Activated CD4-positive, alpha-beta memory T cell treated with anti-CD3 and anti-CD28 coated beads for 36 hours (primary cell): ENCODE measurements at regions of chr3 and their contacts with region 1.

Region 1: GRCh38 chr3:53255775-53256703 is at the start of gene TKT:
- DNase-seq: peak; percentile 88
- H3K4me3 Mint-ChIP-seq: peak within 1 kb of the TSS; percentile 94
- H3K27ac Mint-ChIP-seq: peak within 1 kb of the TSS; percentile 78
- H3K4me1 Mint-ChIP-seq: peaks cover 27% of the 10 kb centered on the region
- H3K27me3 Mint-ChIP-seq: no peaks in the 10 kb centered on the region
- total RNA-seq, gene TKT: 252 to 254 TPM

Region 2: DNA sequence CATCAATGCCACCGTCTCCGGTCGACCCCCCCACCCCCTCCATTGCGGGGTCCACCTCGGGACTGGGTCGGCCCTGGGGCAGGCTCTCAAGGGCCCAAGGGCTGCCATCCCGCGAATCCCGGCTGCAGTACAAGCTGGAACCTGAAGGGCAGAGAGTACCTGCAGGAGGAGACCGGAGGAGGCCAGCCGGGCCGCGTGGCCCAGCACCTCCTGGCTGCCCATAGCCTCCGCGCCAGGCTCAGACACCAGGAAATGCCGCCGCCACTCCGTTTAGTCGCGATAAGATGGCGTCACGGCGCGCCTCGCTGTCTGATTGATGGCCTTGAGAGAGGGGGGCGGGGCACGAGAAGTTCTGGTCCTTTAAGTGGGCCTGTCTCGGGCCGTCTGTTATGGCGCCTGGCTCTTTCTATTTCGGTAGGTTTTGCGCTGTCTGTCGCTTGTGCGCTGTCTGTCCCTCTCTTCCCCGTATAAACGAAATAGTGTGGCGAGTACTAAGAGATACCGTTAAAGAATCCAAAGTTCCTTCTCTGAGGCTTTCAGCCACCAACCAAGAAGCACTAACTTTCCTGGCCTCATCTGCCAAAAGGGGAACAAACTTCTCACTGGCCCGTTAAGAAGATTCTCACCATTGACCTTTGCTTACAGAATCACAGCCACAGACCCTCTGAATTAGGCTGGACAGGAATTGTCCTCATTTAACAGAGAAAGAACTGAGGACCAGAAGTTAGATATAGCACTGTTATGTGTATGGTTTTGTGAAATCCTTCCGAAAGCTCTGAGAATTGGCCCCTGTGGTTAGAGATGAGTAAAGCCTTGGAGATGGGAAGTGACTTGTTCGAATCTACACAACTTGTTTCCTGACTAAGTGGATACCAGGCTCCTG is 125.6 kb before region 1 on chr3 and contains the start of gene RFT1:
- CTCF ChIA-PET with region 1: no interaction called
- POLR2A ChIA-PET with region 1: no interaction called
- intact Hi-C with region 1: loop called (anchors 5 kb)
- DNase-seq: peak; percentile 99
- H3K4me3 Mint-ChIP-seq: peak within 1 kb of the TSS; percentile 95
- H3K27ac Mint-ChIP-seq: peak within 1 kb of the TSS; percentile 97
- H3K4me1 Mint-ChIP-seq: peaks cover 21% of the 10 kb centered on the region
- H3K27me3 Mint-ChIP-seq: no peaks in the 10 kb centered on the region
- total RNA-seq, gene RFT1: 35.0 to 38.2 TPM

Region 3: DNA sequence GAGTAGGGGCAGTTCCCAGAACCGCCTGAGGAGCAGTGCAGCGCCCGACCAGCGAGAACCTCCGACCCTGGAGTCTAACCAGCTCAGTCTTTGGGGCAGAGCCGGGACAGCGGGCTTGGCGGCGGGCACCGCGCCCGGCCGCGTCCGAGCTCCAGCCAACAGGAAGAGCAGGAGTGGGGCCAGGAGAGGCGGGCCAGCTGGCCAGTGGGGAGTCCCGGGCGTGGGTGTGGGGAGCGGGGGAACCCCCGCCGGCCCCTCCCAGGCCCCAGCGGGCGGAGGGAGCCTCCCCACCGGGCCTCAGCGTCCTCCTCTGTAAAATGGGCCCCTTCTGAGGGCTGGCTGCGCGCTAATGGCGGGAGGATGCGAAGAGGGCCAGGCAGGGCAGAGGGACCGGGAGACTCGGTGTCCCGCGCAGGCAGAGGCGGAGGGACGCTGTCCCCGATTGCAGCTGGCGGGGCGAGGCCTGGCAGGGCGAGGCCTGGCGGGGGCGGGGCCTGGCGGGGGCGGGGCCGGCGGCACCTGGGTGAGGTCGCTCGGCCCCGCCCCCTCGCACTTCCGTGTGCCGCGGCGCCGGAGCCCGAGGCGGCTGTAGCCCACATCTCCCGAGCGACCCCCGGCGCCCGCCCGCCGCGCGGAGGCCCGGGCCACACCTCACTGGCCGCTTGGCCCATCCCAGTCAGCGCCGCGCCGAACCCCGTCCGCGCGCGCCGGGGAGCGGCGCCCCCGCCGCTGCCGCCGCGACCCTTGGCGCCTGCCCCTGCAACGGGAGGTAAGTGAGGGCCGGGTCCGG is 95.2 kb before region 1 on chr3 and contains the start of gene PRKCD:
- CTCF ChIA-PET with region 1: no interaction called
- POLR2A ChIA-PET with region 1: no interaction called
- intact Hi-C with region 1: loop called (anchors 5 kb)
- DNase-seq: peak; percentile 85
- H3K4me3 Mint-ChIP-seq: peak within 1 kb of the TSS; percentile 78
- H3K27ac Mint-ChIP-seq: peak within 1 kb of the TSS; percentile 57
- H3K4me1 Mint-ChIP-seq: peaks cover 19% of the 10 kb centered on the region
- H3K27me3 Mint-ChIP-seq: peaks cover 15% of the 10 kb centered on the region
- total RNA-seq, gene PRKCD: 23.8 to 25.9 TPM